Activated CD8-positive, alpha-beta T cell treated with anti-CD3 and anti-CD28 coated beads for 36 hours (primary cell): ENCODE measurements at regions of chr10 and their contacts with region 1.

Region 1: DNA sequence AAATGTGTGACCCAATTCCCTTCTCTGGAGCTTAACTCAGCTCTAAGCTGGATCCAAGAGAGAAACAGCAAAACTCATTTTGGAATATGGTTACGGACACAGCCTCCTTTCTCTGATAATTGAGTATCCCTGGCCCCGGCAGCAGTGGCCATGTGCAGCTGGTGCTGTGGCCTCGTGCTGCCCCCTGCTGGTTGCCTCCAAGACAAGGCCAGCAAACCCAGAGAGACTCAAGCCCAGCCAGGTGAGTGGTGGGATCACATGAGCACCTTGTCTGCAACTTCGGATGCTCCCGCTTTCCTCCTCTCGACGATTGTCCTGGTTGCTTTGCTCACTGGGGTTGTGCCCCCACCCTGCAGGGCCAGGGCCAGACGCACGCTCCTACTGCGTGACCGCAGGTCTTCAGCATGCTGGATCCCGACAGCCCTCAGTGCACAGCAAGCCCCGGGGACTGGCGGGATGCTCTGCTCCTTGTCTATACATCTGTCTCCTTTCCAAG is 19.4 kb downstream of the SFTPD start:
- DNase-seq: peak; percentile 86
- ATAC-seq: peak; percentile 93
- H3K4me3 Mint-ChIP-seq: no peak overlapping the region
- H3K27ac Mint-ChIP-seq: no peak overlapping the region
- H3K4me1 Mint-ChIP-seq: no peaks in the 10 kb centered on the region
- H3K27me3 Mint-ChIP-seq: peaks cover 18% of the 10 kb centered on the region
- CTCF ChIP-seq: peak; percentile 82

Region 2: GRCh38 chr10:79562135-79562756 is 367.2 kb before region 1 on chr10:
- CTCF ChIA-PET with region 1: no interaction called
- POLR2A ChIA-PET with region 1: no interaction called
- intact Hi-C with region 1: loop called (anchors 10 kb)
- DNase-seq: peak; percentile 78
- ATAC-seq: peak; percentile 86
- H3K4me3 Mint-ChIP-seq: no peak overlapping the region
- H3K27ac Mint-ChIP-seq: no peak overlapping the region
- H3K4me1 Mint-ChIP-seq: no peaks in the 10 kb centered on the region
- H3K27me3 Mint-ChIP-seq: peaks cover 15% of the 10 kb centered on the region
- CTCF ChIP-seq: peak; percentile 71